ENCODE measurements at regions of chr5 and their contacts with region 1.

Region 1: GRCh38 chr5:139745800-139746690 is 49.6 kb upstream of the PSD2 start:
- DNase-seq: peak in 1 of 2 donors; percentile 86
- H3K4me3 ChIP-seq: peak overlapping the region; percentile 51 to 75
- H3K27ac ChIP-seq: peak overlapping the region; percentile 75 to 77
- H3K4me1 ChIP-seq: peaks cover 14 to 32% of the 10 kb centered on the region in 2 donors
- H3K27me3 ChIP-seq: no peaks in the 10 kb centered on the region
- CTCF ChIP-seq: no peak

Region 2: GRCh38 chr5:139517683-139518564 is 228.1 kb before region 1 on chr5:
- intact Hi-C with region 1: loop called (anchors 5 kb)
- DNase-seq: peak; percentile 62 to 96
- H3K4me3 ChIP-seq: peak overlapping the region; percentile 66 to 68
- H3K27ac ChIP-seq: peak overlapping the region; percentile 77 to 83
- H3K4me1 ChIP-seq: peaks cover 0 to 2% of the 10 kb centered on the region in 2 donors
- H3K27me3 ChIP-seq: no peaks in the 10 kb centered on the region
- CTCF ChIP-seq: peak; percentile 95 to 99 (median 98)

Region 3: DNA sequence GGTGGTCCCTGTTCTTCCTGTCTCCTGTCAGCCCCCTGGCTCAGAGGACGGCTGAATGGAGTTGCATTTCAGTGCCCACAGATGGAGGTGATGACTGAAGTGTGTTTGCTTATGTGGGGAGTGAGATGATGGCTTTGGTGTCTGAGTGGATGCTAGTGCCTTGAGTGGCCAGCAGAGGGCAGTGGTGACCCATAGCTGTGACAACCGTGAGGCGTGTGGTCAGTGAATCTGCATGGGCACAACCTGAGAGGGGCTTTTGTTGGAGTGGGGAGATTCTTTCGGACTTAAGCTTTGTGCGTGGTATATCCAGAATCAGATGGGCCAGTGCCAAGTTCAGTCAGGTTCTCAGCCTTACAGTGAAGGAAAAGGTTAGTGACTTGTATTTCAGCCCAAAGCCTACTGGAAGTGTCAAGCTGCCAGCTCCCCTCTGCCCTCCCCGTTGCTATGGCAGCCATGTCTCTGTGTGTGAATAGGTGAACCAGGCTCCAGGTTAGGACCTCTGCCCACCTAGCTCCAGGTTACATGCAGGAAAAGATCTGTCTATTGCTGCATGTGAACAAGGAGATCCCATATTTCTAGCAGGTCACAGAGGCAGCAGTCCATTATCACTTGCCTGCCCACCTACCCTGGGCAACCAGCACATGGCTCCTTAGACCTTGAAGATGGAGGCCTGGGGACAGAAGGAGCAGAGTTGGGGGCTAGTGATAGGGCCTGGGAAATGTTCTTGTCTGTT is 112.6 kb before region 1 on chr5:
- intact Hi-C with region 1: loop called (anchors 1 kb)
- DNase-seq: no peak
- H3K4me3 ChIP-seq: no peak overlapping the region
- H3K27ac ChIP-seq: no peak overlapping the region
- H3K4me1 ChIP-seq: peaks cover 7 to 26% of the 10 kb centered on the region in 2 donors
- H3K27me3 ChIP-seq: no peaks in the 10 kb centered on the region
- CTCF ChIP-seq: peak; percentile 90 to 98 (median 98)

Region 4: GRCh38 chr5:139648205-139649081 is 97.6 kb before region 1 on chr5 and contains the start of gene CXXC5:
- intact Hi-C with region 1: loop called (anchors 1 kb)
- DNase-seq: peak in 1 of 2 donors; percentile 88
- H3K4me3 ChIP-seq: peak within 1 kb of the TSS; percentile 76 to 79
- H3K27ac ChIP-seq: peak within 1 kb of the TSS; percentile 96
- H3K4me1 ChIP-seq: peaks cover 15 to 28% of the 10 kb centered on the region in 2 donors
- H3K27me3 ChIP-seq: no peaks in the 10 kb centered on the region
- CTCF ChIP-seq: no peak
- total RNA-seq, gene CXXC5: 41.9 TPM

Region 5: GRCh38 chr5:139696894-139697658 is 49.0 kb before region 1 on chr5:
- intact Hi-C with region 1: loop called (anchors 2 kb)
- DNase-seq: peak in 1 of 2 donors; percentile 89
- H3K4me3 ChIP-seq: peak overlapping the region; percentile 62 to 68
- H3K27ac ChIP-seq: peak overlapping the region; percentile 96
- H3K4me1 ChIP-seq: peaks cover 17 to 37% of the 10 kb centered on the region in 2 donors
- H3K27me3 ChIP-seq: no peaks in the 10 kb centered on the region
- CTCF ChIP-seq: no peak

Region 6: DNA sequence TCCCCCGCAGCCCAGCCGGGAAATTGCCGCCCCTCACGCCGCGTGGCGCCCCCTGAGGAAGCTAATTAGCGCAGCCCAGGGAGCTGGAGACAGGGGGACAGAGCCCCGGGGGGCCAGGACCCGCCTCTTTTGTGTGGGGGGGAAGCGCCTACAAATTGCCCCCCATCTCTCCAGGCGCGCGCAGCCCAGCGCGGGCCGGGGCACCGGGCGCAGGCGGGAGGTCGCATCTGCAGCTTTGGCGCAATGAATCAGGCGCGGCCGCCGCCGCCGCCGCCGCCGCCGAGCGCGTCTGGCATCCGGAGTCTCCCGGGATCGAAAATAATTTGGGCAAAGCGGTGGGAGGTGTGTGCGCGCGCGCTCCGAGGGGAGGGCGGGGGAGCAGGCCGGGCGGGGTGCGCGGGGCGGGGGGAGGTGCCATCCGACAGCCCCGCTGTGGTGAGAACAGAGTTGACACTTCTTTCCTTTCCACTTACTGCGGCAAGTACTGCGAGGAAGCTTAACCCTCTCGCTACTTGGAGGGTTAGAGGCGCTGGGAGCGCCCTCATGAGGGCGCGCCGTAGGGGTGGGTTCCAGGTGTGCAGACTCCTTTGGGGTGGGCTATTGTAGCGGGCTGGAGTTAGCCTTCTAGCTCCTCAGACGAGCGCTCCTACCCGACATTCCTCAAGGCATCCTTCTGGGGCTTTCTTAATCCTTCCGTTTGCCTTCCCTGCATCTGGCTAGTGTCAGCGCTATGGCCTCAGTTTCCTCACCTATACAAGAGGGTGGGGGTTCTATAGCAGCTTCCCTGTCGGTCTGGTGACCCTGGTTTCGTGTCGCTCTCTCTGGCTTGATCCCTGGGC is 34.8 kb before region 1 on chr5:
- intact Hi-C with region 1: loop called (anchors 1 kb)
- DNase-seq: peak in 1 of 2 donors; percentile 84
- H3K4me3 ChIP-seq: peak overlapping the region; percentile 59 to 60
- H3K27ac ChIP-seq: peak overlapping the region; percentile 66 to 71
- H3K4me1 ChIP-seq: peaks cover 8 to 27% of the 10 kb centered on the region in 2 donors
- H3K27me3 ChIP-seq: no peaks in the 10 kb centered on the region
- CTCF ChIP-seq: peak in 1 of 3 experiments; percentile 12

Region 7: GRCh38 chr5:139765409-139766217 is 19.6 kb after region 1 on chr5:
- intact Hi-C with region 1: loop called (anchors 1 kb)
- DNase-seq: peak in 1 of 2 donors; percentile 84
- H3K4me3 ChIP-seq: peak overlapping the region; percentile 47 to 67
- H3K27ac ChIP-seq: no peak overlapping the region
- H3K4me1 ChIP-seq: peaks cover 0 to 7% of the 10 kb centered on the region in 2 donors
- H3K27me3 ChIP-seq: peaks cover 8% of the 10 kb centered on the region
- CTCF ChIP-seq: peak; percentile 94 to 99 (median 99)

Region 8: DNA sequence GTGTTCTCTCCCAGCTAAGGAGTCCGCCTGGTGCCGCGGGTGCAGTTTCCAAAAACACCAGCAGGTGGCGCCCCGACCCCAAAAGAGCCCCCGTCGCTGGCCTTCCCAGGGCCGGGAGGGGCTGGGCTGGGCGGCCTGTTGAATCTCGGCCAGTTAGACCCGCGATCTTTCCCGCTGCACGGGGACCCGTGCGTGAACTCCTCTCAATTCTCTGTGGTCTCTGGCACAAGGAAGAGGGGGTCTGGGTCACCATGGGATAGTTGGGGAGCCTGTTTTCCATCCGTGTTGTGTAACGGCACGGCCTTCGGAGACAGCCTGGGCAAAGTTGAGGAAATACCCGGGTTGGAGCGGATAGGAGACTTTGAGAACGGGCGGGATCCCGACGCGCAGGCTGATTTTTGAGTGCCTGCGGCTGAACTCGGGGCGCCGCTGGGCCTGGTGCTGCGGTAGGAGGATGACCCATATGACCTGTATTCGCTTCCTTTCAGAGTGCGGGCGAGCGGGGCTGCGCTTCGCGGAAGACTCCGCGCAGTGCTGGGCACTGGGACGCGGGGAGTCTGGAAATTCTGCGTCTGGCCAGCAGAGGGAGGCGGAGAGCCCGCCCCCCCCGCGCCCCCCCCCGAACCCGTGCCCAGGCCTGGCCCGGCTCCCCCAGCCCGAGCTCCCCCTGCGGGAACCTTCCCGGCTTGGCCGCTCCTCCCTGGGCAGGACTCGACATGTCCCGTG is 41.7 kb after region 1 on chr5:
- intact Hi-C with region 1: no loop called
- DNase-seq: peak; percentile 58 to 93
- H3K4me3 ChIP-seq: peak overlapping the region; percentile 59 to 72
- H3K27ac ChIP-seq: peak overlapping the region; percentile 81 to 88
- H3K4me1 ChIP-seq: peaks cover 0 to 10% of the 10 kb centered on the region in 2 donors
- H3K27me3 ChIP-seq: no peaks in the 10 kb centered on the region
- CTCF ChIP-seq: peak; percentile 95 to 97 (median 97)

Measured in ascending aorta (tissue), 2 donors.